ENCODE measurements at regions of chr22 and their contacts with region 1.

Region 1: GRCh38 chr22:46315976-46316375 is 19.3 kb downstream of the GTSE1 start:
- DNase-seq: no peak
- H3K4me3 ChIP-seq: no peak overlapping the region
- H3K27me3 ChIP-seq: no peaks in the 10 kb centered on the region
- CTCF ChIP-seq: no peak

Region 2: GRCh38 chr22:46328782-46329181 is 12.8 kb after region 1 on chr22:
- CTCF ChIA-PET with region 1: interaction called, 13 read pairs
- POLR2A ChIA-PET with region 1: no interaction called
- DNase-seq: no peak
- H3K4me3 ChIP-seq: no peak overlapping the region
- H3K27me3 ChIP-seq: no peaks in the 10 kb centered on the region
- CTCF ChIP-seq: no peak

Region 3: GRCh38 chr22:46361826-46362202 is 45.8 kb after region 1 on chr22:
- CTCF ChIA-PET with region 1: no interaction called
- POLR2A ChIA-PET with region 1: no interaction called
- DNase-seq: no peak
- H3K4me3 ChIP-seq: no peak overlapping the region
- H3K27me3 ChIP-seq: no peaks in the 10 kb centered on the region
- CTCF ChIP-seq: no peak

Measured in BJ (cell line).